Sigmoid colon (tissue), 7 donors: ENCODE measurements at regions of chr17 and their contacts with region 1.

Region 1: GRCh38 chr17:41665566-41666236 is 23.0 kb upstream of the EIF1 start:
- DNase-seq: peak; percentile 93
- H3K4me3 ChIP-seq: peak overlapping the region; percentile 41 to 54 (median 46)
- H3K27ac ChIP-seq: peak overlapping the region; percentile 86 to 92 (median 89)
- H3K4me1 ChIP-seq: peaks cover 0 to 26% (median 17%) of the 10 kb centered on the region in 4 donors
- H3K27me3 ChIP-seq: no peaks in the 10 kb centered on the region
- CTCF ChIP-seq: peak; percentile 90 to 94 (median 92)
- EP300 ChIP-seq: no peak
- POLR2A ChIP-seq: peak; percentile 43 to 68

Region 2: DNA sequence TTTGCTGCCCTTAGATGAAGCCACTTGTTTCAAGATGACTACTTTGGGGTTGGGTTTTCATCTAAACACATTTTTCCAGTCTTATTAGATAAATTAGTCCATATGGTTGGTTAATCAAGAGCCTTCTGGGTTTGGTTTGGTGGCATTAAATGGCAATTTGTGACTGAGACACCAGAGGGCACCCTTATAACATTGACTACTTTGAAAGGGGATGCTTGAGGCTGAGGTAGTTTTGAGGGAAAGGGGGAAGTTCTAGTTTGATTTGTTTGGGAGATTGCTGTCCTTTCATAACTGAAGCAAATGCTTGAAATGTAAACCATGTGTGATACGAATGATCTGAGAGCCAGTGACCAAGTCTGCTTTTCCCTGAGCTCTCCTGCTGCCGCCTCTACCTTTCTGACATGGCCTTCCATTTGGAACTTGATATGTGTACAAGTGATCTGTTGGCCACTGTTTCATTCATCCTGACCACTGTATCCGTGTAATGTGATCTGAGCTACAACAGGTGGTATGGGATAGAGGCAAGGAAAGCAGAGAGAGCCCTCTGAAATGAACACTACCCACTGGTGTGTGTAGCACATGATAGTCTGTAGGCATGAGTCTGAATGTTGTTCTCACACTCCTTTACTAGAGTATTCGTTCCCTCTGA is 1362.6 kb before region 1 on chr17:
- intact Hi-C with region 1: loop called (anchors 10 kb)
- DNase-seq: no peak
- H3K4me3 ChIP-seq: no peak overlapping the region
- H3K27ac ChIP-seq: peak overlapping the region; percentile 4 to 86 (median 82)
- H3K4me1 ChIP-seq: peaks cover 0 to 64% (median 62%) of the 10 kb centered on the region in 4 donors
- H3K27me3 ChIP-seq: no peaks in the 10 kb centered on the region
- CTCF ChIP-seq: peak; percentile 73 to 85 (median 76)
- EP300 ChIP-seq: no peak
- POLR2A ChIP-seq: no peak

Region 3: GRCh38 chr17:40551879-40552768 is 1113.6 kb before region 1 on chr17:
- intact Hi-C with region 1: no loop called
- DNase-seq: peak; percentile 86
- H3K4me3 ChIP-seq: peak overlapping the region in 1 of 4 donors; percentile 5
- H3K27ac ChIP-seq: peak overlapping the region; percentile 74 to 90 (median 87)
- H3K4me1 ChIP-seq: peaks cover 0 to 80% (median 73%) of the 10 kb centered on the region in 4 donors
- H3K27me3 ChIP-seq: no peaks in the 10 kb centered on the region
- CTCF ChIP-seq: no peak
- EP300 ChIP-seq: peak in 1 of 4 donors; percentile 35
- POLR2A ChIP-seq: no peak

Region 4: GRCh38 chr17:40647624-40648383 is 1017.9 kb before region 1 on chr17 and contains the start of gene SMARCE1:
- intact Hi-C with region 1: loop called (anchors 10 kb)
- DNase-seq: peak; percentile 84
- H3K4me3 ChIP-seq: peak within 1 kb of the TSS; percentile 62 to 87 (median 72)
- H3K27ac ChIP-seq: peak within 1 kb of the TSS; percentile 94 to 99 (median 98)
- H3K4me1 ChIP-seq: peaks cover 0 to 47% (median 30%) of the 10 kb centered on the region in 4 donors
- H3K27me3 ChIP-seq: no peaks in the 10 kb centered on the region
- CTCF ChIP-seq: no peak
- EP300 ChIP-seq: no peak
- POLR2A ChIP-seq: peak; percentile 35 to 37
- total RNA-seq, gene SMARCE1: 87.3 to 120 (median 94.4) TPM

Region 5: DNA sequence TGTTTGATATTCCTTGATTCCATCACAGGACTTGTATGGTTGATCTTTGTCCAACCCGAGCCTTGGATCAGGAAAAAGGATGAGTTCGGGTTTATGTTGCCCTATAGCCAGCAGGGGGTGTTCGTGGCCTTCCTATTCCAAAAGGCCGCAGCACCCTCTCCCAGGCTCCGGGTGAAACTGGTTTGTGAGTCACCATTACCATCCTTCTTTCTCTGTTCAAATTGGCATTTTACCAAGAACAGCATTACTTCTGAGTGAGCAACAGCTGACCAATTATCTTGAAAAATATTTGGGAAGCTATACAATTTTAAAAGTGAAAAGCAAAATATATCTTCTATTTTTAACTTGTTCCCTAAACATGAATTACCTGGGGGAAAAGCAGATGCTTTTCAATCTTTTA is 756.4 kb before region 1 on chr17:
- intact Hi-C with region 1: loop called (anchors 2 kb)
- DNase-seq: peak; percentile 89
- H3K4me3 ChIP-seq: no peak overlapping the region
- H3K27ac ChIP-seq: peak overlapping the region in 3 of 4 donors; percentile 25 to 72 (median 47)
- H3K4me1 ChIP-seq: peaks cover 0 to 17% (median 15%) of the 10 kb centered on the region in 4 donors
- H3K27me3 ChIP-seq: peaks cover 0 to 9% (median 0%) of the 10 kb centered on the region in 3 donors
- CTCF ChIP-seq: peak; percentile 53 to 74 (median 62)
- EP300 ChIP-seq: no peak
- POLR2A ChIP-seq: no peak

Region 6: DNA sequence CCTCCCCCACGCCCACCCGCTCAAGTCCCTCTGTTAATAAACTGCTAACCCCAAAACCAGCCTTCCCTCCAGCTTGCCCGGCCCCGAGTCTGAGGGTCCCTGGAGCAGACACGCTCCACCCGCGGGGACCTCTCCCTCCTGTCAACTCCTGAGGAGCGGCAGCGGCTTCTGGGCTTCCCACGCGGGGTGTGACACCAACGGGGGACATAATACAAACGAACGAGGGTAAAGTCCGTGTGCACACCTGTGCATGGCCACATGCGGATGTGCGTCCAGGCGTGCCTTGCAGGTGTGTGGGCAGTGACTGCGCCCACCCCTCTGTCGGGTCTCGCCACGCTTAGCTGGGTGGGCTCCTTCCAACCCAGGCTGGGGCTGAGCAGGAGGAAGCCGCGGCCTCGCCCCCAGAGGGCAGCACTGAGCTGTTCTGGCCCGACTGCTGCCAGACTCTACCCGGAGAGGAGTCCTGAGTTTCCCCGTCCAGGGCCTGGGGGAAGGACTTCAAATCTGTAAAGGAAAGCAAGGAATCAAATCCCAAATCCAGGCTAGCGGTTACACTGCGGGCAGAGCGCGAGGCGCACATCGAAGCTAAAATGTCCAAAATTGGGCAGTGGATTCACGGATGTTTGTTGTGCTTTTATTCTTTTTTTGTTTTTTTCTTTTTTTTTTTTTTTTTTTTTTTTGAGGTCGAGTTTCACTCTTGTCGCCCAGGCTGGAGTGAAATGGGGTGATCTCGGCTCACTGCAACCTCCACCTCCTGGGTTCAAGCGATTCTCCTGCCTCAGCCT is 17.1 kb before region 1 on chr17:
- intact Hi-C with region 1: loop called (anchors 1 kb)
- DNase-seq: peak; percentile 92
- H3K4me3 ChIP-seq: peak overlapping the region; percentile 1 to 46 (median 36)
- H3K27ac ChIP-seq: peak overlapping the region; percentile 30 to 59 (median 49)
- H3K4me1 ChIP-seq: peaks cover 0 to 26% (median 14%) of the 10 kb centered on the region in 4 donors
- H3K27me3 ChIP-seq: no peaks in the 10 kb centered on the region
- CTCF ChIP-seq: peak; percentile 82 to 97 (median 92)
- EP300 ChIP-seq: no peak
- POLR2A ChIP-seq: no peak